Heart left ventricle (tissue), 16 donors: ENCODE measurements at regions of chr3 and their contacts with region 1.

Region 1: DNA sequence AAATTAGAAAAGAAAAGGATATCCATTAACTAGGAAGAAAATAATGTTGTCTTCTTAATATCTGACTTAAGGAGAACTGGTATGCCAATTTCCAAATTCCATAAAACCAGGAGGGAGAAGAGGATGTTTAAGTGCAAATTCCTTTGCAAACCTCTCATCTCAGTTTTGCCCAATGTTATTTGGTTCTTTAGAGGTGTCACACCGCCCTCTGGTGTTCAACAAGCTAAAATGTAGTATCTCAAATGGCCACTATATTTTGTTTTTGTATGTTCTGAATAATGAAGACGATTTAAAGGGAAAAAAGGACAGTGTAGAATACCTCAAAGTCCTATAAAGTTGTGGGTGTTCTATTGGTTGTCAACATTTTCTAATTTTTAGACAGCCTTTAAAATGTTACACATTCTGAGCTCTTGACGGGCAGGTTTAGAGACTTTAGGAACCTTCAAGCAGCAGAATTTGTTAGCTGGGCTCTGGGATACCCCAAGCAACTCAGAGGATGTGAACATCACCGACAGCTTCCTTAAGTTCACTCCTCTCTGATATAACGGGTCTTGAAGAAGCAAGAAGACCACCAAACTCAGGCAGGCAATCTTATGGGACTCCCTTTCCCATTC is 458.3 kb downstream of the MFSD1 start:
- DNase-seq: peak in 3 of 5 donors; percentile 20 to 32 (median 29)
- ATAC-seq: peak in 1 of 4 donors; percentile 49
- H3K4me3 ChIP-seq: no peak overlapping the region
- H3K27ac ChIP-seq: no peak overlapping the region
- H3K4me1 ChIP-seq: no peaks in the 10 kb centered on the region
- H3K27me3 ChIP-seq: no peaks in the 10 kb centered on the region
- CTCF ChIP-seq: peak; percentile 54 to 81 (median 71)
- POLR2A ChIP-seq: no peak

Region 2: GRCh38 chr3:158918008-158918407 is 342.1 kb before region 1 on chr3:
- intact Hi-C with region 1: loop called (anchors 2 to 5 kb)
- DNase-seq: peak in 1 of 5 donors; percentile 38
- ATAC-seq: peak in 3 of 4 donors; percentile 49 to 67 (median 56)
- H3K4me3 ChIP-seq: no peak overlapping the region
- H3K27ac ChIP-seq: no peak overlapping the region
- H3K4me1 ChIP-seq: no peaks in the 10 kb centered on the region
- H3K27me3 ChIP-seq: no peaks in the 10 kb centered on the region
- CTCF ChIP-seq: peak; percentile 9 to 57 (median 43)
- POLR2A ChIP-seq: no peak

Region 3: GRCh38 chr3:158935846-158936245 is 324.3 kb before region 1 on chr3:
- intact Hi-C with region 1: no loop called
- DNase-seq: no peak
- ATAC-seq: no peak
- H3K4me3 ChIP-seq: no peak overlapping the region
- H3K27ac ChIP-seq: no peak overlapping the region
- H3K4me1 ChIP-seq: no peaks in the 10 kb centered on the region
- H3K27me3 ChIP-seq: no peaks in the 10 kb centered on the region
- CTCF ChIP-seq: no peak
- POLR2A ChIP-seq: no peak

Region 4: DNA sequence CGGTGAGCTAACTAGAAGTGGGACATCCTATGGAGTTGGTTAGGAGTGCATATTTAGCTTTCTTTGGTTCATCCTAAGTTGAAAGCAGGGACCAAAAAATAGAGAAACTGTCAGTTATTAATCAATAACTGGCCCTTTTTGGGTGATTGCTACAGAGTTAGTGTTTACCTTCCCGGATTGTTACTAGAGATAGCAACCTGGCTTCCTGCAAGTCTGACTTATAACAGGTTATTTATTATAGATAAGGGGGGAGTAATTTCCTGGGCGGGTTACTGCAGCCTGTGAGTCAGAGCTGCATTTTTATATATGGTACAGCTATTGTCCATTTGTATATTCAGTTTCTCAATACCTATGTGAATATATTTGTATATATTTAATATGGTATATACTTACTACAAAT is 63.7 kb after region 1 on chr3:
- intact Hi-C with region 1: no loop called
- DNase-seq: no peak
- ATAC-seq: no peak
- H3K4me3 ChIP-seq: no peak overlapping the region
- H3K27ac ChIP-seq: no peak overlapping the region
- H3K4me1 ChIP-seq: no peaks in the 10 kb centered on the region
- H3K27me3 ChIP-seq: no peaks in the 10 kb centered on the region
- CTCF ChIP-seq: no peak
- POLR2A ChIP-seq: no peak

Region 5: DNA sequence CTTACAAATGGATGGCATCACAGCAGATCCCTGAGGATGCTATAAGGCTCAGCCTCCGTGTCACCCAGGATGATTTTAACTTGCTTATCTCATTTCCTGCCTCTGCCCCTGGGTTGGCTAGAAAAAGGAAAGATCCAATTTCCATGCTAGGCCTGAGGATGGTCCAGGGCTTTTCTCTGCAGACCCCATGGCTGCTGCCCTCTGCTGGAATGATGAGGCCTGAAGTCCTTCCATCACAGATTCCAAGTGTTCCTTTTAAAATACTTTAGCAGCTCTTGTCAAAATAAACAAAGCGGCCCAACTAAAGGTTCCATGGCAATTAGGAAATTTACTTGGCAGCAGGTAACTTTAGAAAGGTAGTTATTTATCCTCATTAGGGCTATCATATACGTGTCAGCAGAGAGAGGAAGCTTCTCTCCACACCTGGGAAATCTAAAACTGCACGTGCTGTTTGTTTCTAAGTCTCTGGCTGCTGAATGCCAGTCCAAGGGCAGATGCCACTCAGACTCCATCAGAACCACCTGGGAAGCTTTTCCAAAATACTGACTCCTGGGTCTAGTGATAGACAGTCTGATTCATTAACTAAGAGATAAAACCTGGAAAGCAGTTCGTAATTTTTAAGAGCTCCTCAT is 326.5 kb after region 1 on chr3:
- intact Hi-C with region 1: loop called in 4 of 10 experiments (anchors 5 to 10 kb)
- DNase-seq: peak in 1 of 5 donors; percentile 21
- ATAC-seq: peak in 1 of 4 donors; percentile 33
- H3K4me3 ChIP-seq: no peak overlapping the region
- H3K27ac ChIP-seq: no peak overlapping the region
- H3K4me1 ChIP-seq: no peaks in the 10 kb centered on the region
- H3K27me3 ChIP-seq: no peaks in the 10 kb centered on the region
- CTCF ChIP-seq: peak in 11 of 12 donors; percentile 7 to 55 (median 39)
- POLR2A ChIP-seq: no peak

Region 6: GRCh38 chr3:159593927-159594605 is 333.9 kb after region 1 on chr3:
- intact Hi-C with region 1: loop called in 3 of 10 experiments (anchors 10 kb)
- DNase-seq: no peak
- ATAC-seq: peak in 2 of 4 donors; percentile 10 to 88
- H3K4me3 ChIP-seq: no peak overlapping the region
- H3K27ac ChIP-seq: no peak overlapping the region
- H3K4me1 ChIP-seq: peaks cover 0 to 6% (median 0%) of the 10 kb centered on the region in 12 donors
- H3K27me3 ChIP-seq: no peaks in the 10 kb centered on the region
- CTCF ChIP-seq: no peak
- POLR2A ChIP-seq: no peak